Sigmoid colon (tissue), 7 donors: ENCODE measurements at regions of chr15 and their contacts with region 1.

Region 1: GRCh38 chr15:94324117-94324826 is 92.9 kb downstream of the MCTP2 start:
- DNase-seq: peak; percentile 70
- H3K4me3 ChIP-seq: no peak overlapping the region
- H3K27ac ChIP-seq: no peak overlapping the region
- H3K4me1 ChIP-seq: no peaks in the 10 kb centered on the region
- H3K27me3 ChIP-seq: no peaks in the 10 kb centered on the region
- CTCF ChIP-seq: peak; percentile 67 to 91 (median 86)
- EP300 ChIP-seq: no peak
- POLR2A ChIP-seq: no peak

Region 2: DNA sequence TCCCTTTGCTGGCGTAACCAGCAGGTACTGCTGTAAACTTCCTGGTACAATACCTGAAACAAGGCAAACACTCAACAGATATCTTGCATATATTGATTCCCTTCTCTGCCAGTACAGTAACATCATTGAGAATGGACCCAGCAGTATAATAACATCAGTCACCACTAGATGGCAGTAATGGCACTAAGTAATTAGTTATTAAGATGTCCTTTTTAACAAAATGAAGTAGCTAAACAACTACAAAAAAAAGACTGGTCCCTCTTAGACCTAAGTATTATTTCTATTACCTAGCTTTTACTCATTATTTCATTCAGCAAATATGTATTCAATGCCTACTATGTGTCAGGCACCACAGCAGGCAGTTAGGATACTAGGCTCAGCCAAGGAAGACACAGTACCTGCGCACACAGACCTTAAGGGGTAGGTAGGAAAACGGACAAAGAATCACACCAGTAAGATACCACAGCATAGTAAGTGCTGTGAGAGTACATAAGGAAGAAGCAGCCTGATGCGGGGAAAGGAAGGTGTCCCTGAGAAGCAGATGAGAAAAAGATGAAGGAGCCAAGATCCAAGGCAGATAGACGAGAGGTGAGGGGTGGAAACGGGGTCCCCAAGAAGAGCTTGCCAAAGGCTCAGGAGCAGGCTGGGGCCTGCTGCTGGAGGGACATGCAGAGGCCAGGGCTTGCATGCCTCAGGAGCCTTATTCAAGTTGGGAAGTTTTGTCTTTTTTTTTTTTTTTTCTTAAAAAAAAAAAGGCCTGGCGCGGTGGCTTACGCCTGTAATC is 1526.9 kb before region 1 on chr15:
- intact Hi-C with region 1: loop called (anchors 10 kb)
- DNase-seq: no peak
- H3K4me3 ChIP-seq: no peak overlapping the region
- H3K27ac ChIP-seq: peak overlapping the region; percentile 50 to 62 (median 56)
- H3K4me1 ChIP-seq: peaks cover 0 to 19% (median 12%) of the 10 kb centered on the region in 4 donors
- H3K27me3 ChIP-seq: no peaks in the 10 kb centered on the region
- CTCF ChIP-seq: peak; percentile 60 to 86 (median 80)
- EP300 ChIP-seq: no peak
- POLR2A ChIP-seq: no peak

Region 3: DNA sequence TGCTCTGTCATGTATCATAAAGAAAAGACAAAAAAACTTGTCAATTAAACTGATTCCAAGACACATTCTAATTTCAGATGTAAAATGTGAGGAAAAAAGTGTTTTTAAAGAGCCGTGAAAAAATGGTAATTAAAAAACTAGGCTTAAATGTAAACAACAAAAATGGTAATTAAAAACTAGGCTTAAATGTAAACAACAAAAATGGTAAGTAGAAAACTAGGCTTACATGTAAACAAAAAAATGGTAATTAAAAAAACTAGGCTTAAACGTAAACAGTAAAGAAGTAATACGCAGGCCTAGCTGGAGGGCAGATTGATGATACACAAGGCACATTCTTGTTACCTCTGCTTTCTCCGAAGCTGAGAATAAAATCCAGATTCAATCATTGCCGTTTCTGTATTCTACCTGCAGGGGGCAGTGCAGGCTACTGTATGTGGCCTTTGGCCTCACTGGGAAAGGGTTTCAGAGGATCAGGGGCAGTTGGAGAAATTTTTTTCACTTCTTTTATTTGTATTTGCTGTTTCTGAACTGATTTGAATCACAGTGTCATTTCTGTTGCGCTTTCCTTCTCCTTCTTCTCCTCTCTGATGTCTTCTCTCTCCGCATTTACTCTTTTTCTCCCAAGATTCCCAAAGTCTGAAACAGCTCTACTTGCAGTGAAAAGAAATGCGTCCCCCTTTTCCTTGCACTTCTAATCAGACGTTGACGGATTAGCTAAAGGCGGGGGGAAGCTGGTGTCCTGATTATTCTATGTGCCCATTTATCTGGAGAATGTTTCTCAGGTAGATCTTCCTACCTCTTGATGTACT is 160.1 kb before region 1 on chr15:
- intact Hi-C with region 1: loop called (anchors 1 kb)
- DNase-seq: no peak
- H3K4me3 ChIP-seq: no peak overlapping the region
- H3K27ac ChIP-seq: no peak overlapping the region
- H3K4me1 ChIP-seq: no peaks in the 10 kb centered on the region
- H3K27me3 ChIP-seq: no peaks in the 10 kb centered on the region
- CTCF ChIP-seq: peak in 3 of 4 experiments; percentile 58 to 76 (median 59)
- EP300 ChIP-seq: no peak
- POLR2A ChIP-seq: no peak